ENCODE measurements at regions of chr2 and their contacts with region 1.

Region 1: DNA sequence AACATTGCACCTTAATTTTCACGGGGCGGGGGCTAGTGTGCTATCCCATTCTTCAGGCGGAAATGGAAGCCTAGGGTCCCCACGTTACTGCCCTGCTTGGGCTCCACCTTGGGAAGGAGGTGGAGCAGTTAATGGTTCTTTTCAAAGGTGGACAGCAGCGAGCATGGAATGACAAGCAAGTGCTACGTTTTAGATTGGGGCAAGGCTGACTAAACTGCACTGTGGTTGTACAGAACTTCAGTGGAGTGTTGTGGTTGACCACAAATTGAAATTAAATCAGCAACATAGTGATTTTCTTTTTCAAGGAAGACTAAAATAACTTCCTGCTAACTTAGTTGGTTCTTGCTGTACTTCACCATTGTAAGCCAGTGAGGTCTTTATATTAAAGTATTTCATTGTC is 47.0 kb downstream of the CHRNA1 start:
- DNase-seq: peak; percentile 51
- H3K4me3 Mint-ChIP-seq: peak overlapping the region; percentile 37
- H3K27ac Mint-ChIP-seq: peak overlapping the region; percentile 76
- H3K4me1 Mint-ChIP-seq: peaks cover 28% of the 10 kb centered on the region
- H3K27me3 Mint-ChIP-seq: no peaks in the 10 kb centered on the region

Region 2: DNA sequence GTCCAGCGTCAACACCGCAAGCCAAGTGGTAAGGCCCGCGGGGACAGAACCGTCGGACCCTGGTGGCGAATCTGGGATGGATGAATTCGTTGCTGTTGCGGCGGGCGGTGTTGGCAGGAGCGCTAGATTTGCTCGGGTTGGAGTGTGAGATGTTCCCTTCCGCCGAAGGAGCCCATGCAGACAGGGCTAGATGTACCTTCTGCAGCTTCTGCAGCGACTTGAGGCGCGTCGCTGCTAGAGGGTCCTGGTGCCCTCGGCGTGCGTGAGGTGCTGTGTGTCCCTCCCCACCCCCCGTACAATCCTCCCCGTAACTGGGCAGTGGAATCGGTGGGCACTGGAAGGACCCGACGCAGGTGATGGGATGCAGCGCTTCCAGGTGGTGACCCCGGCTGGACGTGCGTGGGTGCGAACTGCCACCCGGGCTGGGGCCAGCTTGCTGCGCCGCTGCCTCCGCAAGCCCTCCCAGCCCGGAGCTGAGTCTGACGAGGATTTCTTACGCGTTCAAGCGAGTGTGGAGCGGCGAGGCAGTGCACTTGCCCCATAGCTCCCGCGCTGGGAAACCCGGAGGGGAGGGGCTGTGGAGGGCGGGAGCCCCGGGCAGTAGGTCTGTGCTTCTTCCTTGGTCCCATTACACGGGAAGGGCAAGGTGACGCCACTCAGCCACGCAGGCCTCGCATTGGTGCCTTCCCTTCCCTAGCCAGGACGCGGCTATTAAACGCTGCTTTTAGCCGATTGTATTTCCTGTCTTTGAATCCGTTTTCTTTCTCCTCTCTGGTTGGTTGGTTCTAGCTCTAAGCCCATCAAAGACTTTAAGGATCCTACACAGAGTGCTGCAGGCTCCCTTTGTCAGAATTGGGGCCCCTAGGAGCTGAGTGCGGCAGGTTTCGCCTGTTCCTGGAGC is 12.8 kb after region 1 on chr2:
- CTCF ChIA-PET with region 1: interaction called, 10 read pairs
- POLR2A ChIA-PET with region 1: no interaction called
- DNase-seq: peak; percentile 37
- H3K4me3 Mint-ChIP-seq: peak overlapping the region; percentile 74
- H3K27ac Mint-ChIP-seq: peak overlapping the region; percentile 42
- H3K4me1 Mint-ChIP-seq: peaks cover 26% of the 10 kb centered on the region
- H3K27me3 Mint-ChIP-seq: peaks cover 40% of the 10 kb centered on the region

Region 3: GRCh38 chr2:174740721-174741120 is 23.4 kb after region 1 on chr2:
- CTCF ChIA-PET with region 1: no interaction called
- POLR2A ChIA-PET with region 1: no interaction called
- DNase-seq: no peak
- H3K4me3 Mint-ChIP-seq: no peak overlapping the region
- H3K27ac Mint-ChIP-seq: no peak overlapping the region
- H3K4me1 Mint-ChIP-seq: no peaks in the 10 kb centered on the region
- H3K27me3 Mint-ChIP-seq: peaks cover 6% of the 10 kb centered on the region

Measured in activated CD4-positive, alpha-beta T cell treated with anti-CD3 and anti-CD28 coated beads, Interleukin-2, amount 10 ng/mL, durations not matched to agents 7 days and 5 days (primary cell).